ENCODE measurements at regions of chr12 and their contacts with region 1.

Region 1: DNA sequence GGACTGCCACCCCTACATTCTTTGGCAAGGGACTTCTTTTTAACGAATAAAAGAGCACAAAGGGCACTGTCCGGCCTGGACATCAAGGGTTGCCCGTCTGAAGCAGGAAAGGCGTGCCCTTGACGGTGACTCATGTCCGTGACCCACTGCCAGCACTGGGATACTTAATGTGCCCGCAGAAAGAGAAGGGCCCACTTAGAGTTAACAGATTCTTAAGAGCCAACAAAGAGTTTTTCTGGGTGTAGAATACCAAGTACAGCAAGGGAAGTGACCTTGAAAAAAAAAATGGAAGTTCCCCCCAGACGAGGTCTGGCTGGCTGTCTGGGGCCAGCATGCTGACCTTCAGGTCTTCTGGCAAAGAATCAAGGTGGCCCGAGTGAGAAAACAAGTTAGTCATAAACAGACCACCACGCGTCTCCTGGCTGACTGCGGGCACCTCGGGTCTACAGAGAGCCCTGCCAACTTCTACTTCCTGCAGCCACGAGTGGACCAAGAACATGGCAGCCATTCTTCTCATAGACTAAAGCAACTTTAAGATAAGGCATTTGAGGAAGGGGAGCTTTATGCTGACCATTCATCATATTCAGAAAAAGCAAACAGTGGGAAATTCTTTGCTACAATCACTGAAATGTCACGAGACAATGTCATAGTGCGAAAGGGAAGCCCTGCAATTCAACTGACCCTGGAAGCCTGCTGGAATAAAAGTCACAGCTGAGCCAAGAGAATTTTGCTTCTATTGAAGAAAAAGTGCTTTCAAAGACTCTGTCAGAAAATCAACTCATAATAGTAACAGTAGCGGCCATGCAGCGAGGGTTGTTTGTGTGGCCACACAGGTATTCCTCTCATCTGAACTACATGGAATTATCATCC is 10.5 kb upstream of the SELPLG start:
- DNase-seq: peak; percentile 59
- ATAC-seq: peak; percentile 95
- H3K4me3 ChIP-seq: no peak overlapping the region
- H3K27ac ChIP-seq: no peak overlapping the region
- H3K4me1 ChIP-seq: peaks cover 18% of the 10 kb centered on the region
- H3K27me3 ChIP-seq: no peaks in the 10 kb centered on the region
- CTCF ChIP-seq: no peak

Region 2: DNA sequence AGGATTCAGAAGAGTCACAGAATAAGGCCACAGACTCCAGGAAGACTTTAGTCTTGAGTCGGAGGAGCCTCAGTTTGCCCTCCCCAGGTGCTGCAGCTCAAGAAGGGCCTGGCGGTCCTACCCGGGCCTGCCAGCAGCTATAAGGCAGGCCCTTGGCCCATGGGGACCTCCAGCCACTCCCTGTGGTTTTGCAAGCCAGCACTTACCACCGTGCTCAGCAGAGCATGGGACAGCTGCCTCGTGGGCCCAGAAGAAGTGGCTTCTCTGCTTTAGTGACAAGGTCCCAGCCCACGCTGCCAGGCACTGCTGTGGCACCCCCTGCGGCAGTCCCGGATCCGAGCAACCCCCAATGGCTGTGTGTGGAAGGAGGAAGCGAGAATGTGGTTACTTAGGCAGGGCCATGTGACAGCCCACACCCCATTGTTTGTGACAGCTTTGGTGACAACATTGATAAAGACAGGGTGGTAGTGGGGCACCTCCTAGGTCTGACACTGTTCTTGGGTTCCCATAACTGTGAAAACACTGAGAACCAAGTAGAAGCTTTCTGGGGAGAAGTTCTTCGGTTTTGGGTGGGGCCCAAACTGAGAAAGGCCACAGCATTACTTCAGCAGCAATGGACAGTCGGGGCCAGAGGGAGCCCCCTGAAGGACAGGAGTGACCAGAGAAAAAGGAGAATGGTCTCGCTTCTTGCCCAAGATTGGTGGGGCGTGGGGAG is 10.5 kb before region 1 on chr12 and contains the start of gene SELPLG:
- CTCF ChIA-PET with region 1: interaction called, 3 read pairs
- POLR2A ChIA-PET with region 1: no interaction called
- intact Hi-C with region 1: loop called (anchors 2 kb)
- DNase-seq: no peak
- ATAC-seq: no peak
- H3K4me3 ChIP-seq: no peak within 1 kb of the TSS
- H3K27ac ChIP-seq: no peak within 1 kb of the TSS
- H3K4me1 ChIP-seq: peaks cover 35% of the 10 kb centered on the region
- H3K27me3 ChIP-seq: no peaks in the 10 kb centered on the region
- CTCF ChIP-seq: no peak
- total RNA-seq, gene SELPLG: 0.63 and 0.73 TPM in 2 replicates

Region 3: GRCh38 chr12:109209082-109209481 is 564.9 kb after region 1 on chr12:
- CTCF ChIA-PET with region 1: no interaction called
- POLR2A ChIA-PET with region 1: no interaction called
- intact Hi-C with region 1: no loop called
- DNase-seq: no peak
- ATAC-seq: no peak
- H3K4me3 ChIP-seq: no peak overlapping the region
- H3K27ac ChIP-seq: no peak overlapping the region
- H3K4me1 ChIP-seq: no peaks in the 10 kb centered on the region
- H3K27me3 ChIP-seq: no peaks in the 10 kb centered on the region
- CTCF ChIP-seq: no peak

Measured in PC-3 (cell line).